Panc1 (cell line): ENCODE measurements at regions of chr18 and their contacts with region 1.

Region 1: GRCh38 chr18:23138471-23138870 is 3.2 kb downstream of the CABLES1 start:
- DNase-seq: no peak
- ATAC-seq: no peak
- H3K4me3 ChIP-seq: peak overlapping the region; percentile 69 to 91
- H3K27ac ChIP-seq: peak overlapping the region; percentile 92
- H3K4me1 ChIP-seq: peaks cover 66% of the 10 kb centered on the region
- H3K27me3 ChIP-seq: no peaks in the 10 kb centered on the region
- CTCF ChIP-seq: no peak

Region 2: GRCh38 chr18:23042133-23042532 is 96.3 kb before region 1 on chr18:
- CTCF ChIA-PET with region 1: no interaction called
- POLR2A ChIA-PET with region 1: interaction called, 12 read pairs
- in situ Hi-C with region 1: no loop called
- intact Hi-C with region 1: no loop called
- DNase-seq: no peak
- ATAC-seq: no peak
- H3K4me3 ChIP-seq: no peak overlapping the region
- H3K27ac ChIP-seq: no peak overlapping the region
- H3K4me1 ChIP-seq: no peaks in the 10 kb centered on the region
- H3K27me3 ChIP-seq: no peaks in the 10 kb centered on the region
- CTCF ChIP-seq: no peak

Region 3: GRCh38 chr18:23437357-23438045 is 299.0 kb after region 1 on chr18:
- CTCF ChIA-PET with region 1: no interaction called
- POLR2A ChIA-PET with region 1: no interaction called
- in situ Hi-C with region 1: no loop called
- intact Hi-C with region 1: no loop called
- DNase-seq: no peak
- ATAC-seq: peak; percentile 96
- H3K4me3 ChIP-seq: peak overlapping the region; percentile 73 to 99
- H3K27ac ChIP-seq: peak overlapping the region; percentile 90
- H3K4me1 ChIP-seq: peaks cover 9% of the 10 kb centered on the region; the same call in 1 of the 2 replicates
- H3K27me3 ChIP-seq: no peaks in the 10 kb centered on the region
- CTCF ChIP-seq: no peak

Region 4: GRCh38 chr18:23479829-23480505 is 341.5 kb after region 1 on chr18:
- CTCF ChIA-PET with region 1: no interaction called
- POLR2A ChIA-PET with region 1: no interaction called
- in situ Hi-C with region 1: no loop called
- intact Hi-C with region 1: no loop called
- DNase-seq: no peak
- ATAC-seq: no peak
- H3K4me3 ChIP-seq: no peak overlapping the region
- H3K27ac ChIP-seq: no peak overlapping the region
- H3K4me1 ChIP-seq: no peaks in the 10 kb centered on the region
- H3K27me3 ChIP-seq: no peaks in the 10 kb centered on the region
- CTCF ChIP-seq: no peak